ENCODE measurements at regions of chr1 and their contacts with region 1.

Region 1: GRCh38 chr1:89762779-89763648 is 57.8 kb upstream of the LRRC8D start:
- DNase-seq: peak; percentile 90
- H3K4me3 ChIP-seq: peak overlapping the region; percentile 52 to 60
- H3K27ac ChIP-seq: peak overlapping the region in 1 of 2 experiments; percentile 86; a peak in 2 of 4 replicates
- H3K4me1 ChIP-seq: peaks cover 5 to 22% of the 10 kb centered on the region in 2 experiments; a peak in 3 of 4 replicates
- H3K27me3 ChIP-seq: no peaks in the 10 kb centered on the region
- CTCF ChIP-seq: peak; percentile 97
- EP300 ChIP-seq: peak in 1 of 2 experiments; percentile 48; a peak in 2 of 4 replicates
- RAD21 ChIP-seq: peak; percentile 91

Region 2: DNA sequence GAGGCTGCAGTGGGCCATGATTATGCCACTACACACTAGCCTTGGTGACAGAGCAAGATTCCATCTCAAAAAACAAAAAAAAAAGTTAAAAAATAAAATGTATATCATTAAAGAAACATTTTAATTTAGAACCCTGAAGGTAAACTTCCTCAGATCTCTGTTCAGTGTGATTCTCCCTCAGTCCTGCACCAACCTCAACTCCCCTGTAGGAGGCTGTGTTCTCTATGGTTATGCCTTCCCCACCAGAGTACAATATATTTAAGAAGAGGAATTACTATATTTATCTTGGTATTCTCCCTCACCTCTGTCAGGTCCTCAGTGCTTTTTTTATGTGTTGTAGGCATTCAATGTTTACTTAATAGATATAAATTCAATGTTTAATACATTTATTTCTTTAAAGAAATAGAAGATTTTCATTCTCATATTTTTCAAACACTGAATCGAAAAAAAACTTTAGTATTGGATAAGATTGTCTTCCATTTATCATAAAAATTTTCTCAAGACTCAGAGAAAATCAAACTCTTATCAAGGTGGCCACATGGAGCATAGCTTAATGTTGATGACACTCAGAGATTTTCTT is 243.1 kb before region 1 on chr1:
- CTCF ChIA-PET with region 1: interaction called, 24 read pairs
- POLR2A ChIA-PET with region 1: no interaction called
- DNase-seq: peak; percentile 54
- H3K4me3 ChIP-seq: no peak overlapping the region
- H3K27ac ChIP-seq: no peak overlapping the region
- H3K4me1 ChIP-seq: peaks cover 3 to 7% of the 10 kb centered on the region in 2 experiments; a peak in 2 of 4 replicates
- H3K27me3 ChIP-seq: no peaks in the 10 kb centered on the region
- CTCF ChIP-seq: peak; percentile 58
- EP300 ChIP-seq: no peak
- RAD21 ChIP-seq: peak; percentile 75

Region 3: DNA sequence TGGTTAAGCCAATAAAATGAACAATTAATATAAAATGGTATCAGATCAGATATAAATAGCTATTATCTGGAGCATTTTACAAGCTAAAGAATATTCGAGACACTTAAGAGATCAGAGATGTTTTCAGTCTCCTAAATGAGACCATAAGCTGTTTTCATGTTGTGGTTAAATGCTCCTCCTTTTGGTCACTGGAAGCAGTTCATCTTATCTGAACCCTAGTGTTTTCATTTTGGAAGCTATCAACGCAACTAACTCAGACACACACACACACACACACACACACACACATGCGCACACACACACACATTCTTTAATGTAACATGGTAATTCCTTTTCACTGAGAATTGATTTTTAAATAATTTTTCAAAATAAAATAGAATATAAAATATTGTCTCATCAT is 140.1 kb before region 1 on chr1:
- CTCF ChIA-PET with region 1: interaction called, 37 read pairs
- POLR2A ChIA-PET with region 1: interaction called, 3 read pairs
- DNase-seq: peak; percentile 31
- H3K4me3 ChIP-seq: no peak overlapping the region
- H3K27ac ChIP-seq: no peak overlapping the region
- H3K4me1 ChIP-seq: no peaks in the 10 kb centered on the region; a peak in 2 of 4 replicates
- H3K27me3 ChIP-seq: no peaks in the 10 kb centered on the region
- CTCF ChIP-seq: peak; percentile 36
- EP300 ChIP-seq: no peak
- RAD21 ChIP-seq: peak; percentile 61

Region 4: DNA sequence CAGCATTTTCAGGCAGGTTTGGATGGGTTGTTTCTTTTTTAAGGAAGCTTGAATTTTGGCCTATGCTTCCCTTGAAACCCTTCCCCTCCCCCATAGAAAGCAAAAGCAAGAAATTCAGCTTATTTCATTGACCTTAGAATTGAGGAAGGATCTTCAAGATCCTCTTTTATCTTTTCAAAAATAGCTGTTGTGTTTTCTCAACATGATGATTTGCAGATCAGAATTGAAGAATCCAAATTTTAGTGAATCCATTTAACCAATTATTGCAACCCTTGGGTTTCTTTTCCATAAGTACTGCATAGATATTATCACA is 56.4 kb before region 1 on chr1:
- CTCF ChIA-PET with region 1: interaction called, 22 read pairs
- POLR2A ChIA-PET with region 1: no interaction called
- DNase-seq: no peak
- H3K4me3 ChIP-seq: no peak overlapping the region
- H3K27ac ChIP-seq: no peak overlapping the region; a peak in 1 of 4 replicates
- H3K4me1 ChIP-seq: peaks cover 6 to 9% of the 10 kb centered on the region in 2 experiments; a peak in 3 of 4 replicates
- H3K27me3 ChIP-seq: no peaks in the 10 kb centered on the region
- CTCF ChIP-seq: no peak
- EP300 ChIP-seq: no peak
- RAD21 ChIP-seq: no peak

Region 5: GRCh38 chr1:89725011-89725370 is 38.0 kb before region 1 on chr1:
- CTCF ChIA-PET with region 1: interaction called, 24 read pairs
- POLR2A ChIA-PET with region 1: no interaction called
- DNase-seq: no peak
- H3K4me3 ChIP-seq: no peak overlapping the region
- H3K27ac ChIP-seq: peak overlapping the region in 1 of 2 experiments; percentile 60; a peak in 2 of 4 replicates
- H3K4me1 ChIP-seq: peaks cover 6 to 29% of the 10 kb centered on the region in 2 experiments; a peak in 3 of 4 replicates
- H3K27me3 ChIP-seq: no peaks in the 10 kb centered on the region
- CTCF ChIP-seq: no peak
- EP300 ChIP-seq: no peak
- RAD21 ChIP-seq: no peak

Region 6: GRCh38 chr1:89987170-89987819 is 224.3 kb after region 1 on chr1:
- CTCF ChIA-PET with region 1: interaction called, 17 read pairs
- POLR2A ChIA-PET with region 1: no interaction called
- DNase-seq: peak; percentile 81
- H3K4me3 ChIP-seq: no peak overlapping the region; a peak in 1 of 4 replicates
- H3K27ac ChIP-seq: no peak overlapping the region
- H3K4me1 ChIP-seq: peaks cover 0 to 5% of the 10 kb centered on the region in 2 experiments; a peak in 3 of 4 replicates
- H3K27me3 ChIP-seq: no peaks in the 10 kb centered on the region
- CTCF ChIP-seq: peak; percentile 90
- EP300 ChIP-seq: no peak
- RAD21 ChIP-seq: peak; percentile 97

Measured in SK-N-SH (cell line).